Endothelial cell of umbilical vein (primary cell): ENCODE measurements at regions of chr10 and their contacts with region 1.

Region 1: GRCh38 chr10:67849331-67850011 is 11.5 kb upstream of the DNAJC12 start:
- DNase-seq: peak; percentile 92
- H3K4me3 ChIP-seq: peak overlapping the region; percentile 66 to 88 (median 74)
- H3K27ac ChIP-seq: peak overlapping the region; percentile 74
- H3K4me1 ChIP-seq: peaks cover 3% of the 10 kb centered on the region
- H3K27me3 ChIP-seq: no peaks in the 10 kb centered on the region
- CTCF ChIP-seq: no peak
- POLR2A ChIP-seq: peak; percentile 61

Region 2: DNA sequence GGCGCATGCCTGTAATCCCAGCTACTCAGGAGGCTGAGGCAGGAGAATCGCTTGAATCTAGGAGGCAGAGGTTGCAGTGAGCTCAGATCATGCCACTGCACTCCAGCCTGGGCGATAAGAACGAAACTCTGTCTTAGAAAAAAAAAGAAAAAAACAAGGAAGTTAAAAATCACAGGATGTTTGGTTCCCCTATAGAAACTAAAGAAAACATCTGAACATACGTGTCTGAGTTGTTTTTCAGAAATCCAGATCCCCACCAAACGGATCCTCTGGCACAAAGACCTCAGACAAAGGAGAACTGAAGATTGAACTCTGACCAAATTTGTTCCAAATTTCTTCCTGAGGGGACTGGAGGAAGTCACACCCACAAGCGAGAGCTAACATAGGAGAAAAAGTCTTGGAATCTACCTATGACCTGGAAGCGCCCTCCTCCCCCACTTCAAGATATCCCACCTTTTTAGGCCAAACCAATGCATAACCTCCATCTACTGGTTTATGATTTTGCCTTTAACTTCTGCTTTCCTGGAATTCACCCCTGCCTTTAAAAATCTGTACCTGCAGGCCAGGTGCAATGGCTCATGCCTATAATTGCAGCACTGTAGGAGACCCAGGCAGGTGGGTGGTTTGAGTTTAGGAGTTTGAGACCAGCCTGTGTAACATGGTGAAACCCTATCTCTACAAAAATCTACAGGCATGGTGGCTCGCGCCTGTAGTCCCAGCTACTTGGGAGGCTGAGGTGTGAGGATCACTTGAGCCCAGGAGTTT is 15.3 kb after region 1 on chr10:
- CTCF ChIA-PET with region 1: interaction called, 17 read pairs
- POLR2A ChIA-PET with region 1: no interaction called
- dilution Hi-C with region 1: no loop called
- intact Hi-C with region 1: no loop called
- DNase-seq: no peak
- H3K4me3 ChIP-seq: no peak overlapping the region
- H3K27ac ChIP-seq: no peak overlapping the region
- H3K4me1 ChIP-seq: no peaks in the 10 kb centered on the region
- H3K27me3 ChIP-seq: no peaks in the 10 kb centered on the region
- CTCF ChIP-seq: no peak
- POLR2A ChIP-seq: no peak

Region 3: DNA sequence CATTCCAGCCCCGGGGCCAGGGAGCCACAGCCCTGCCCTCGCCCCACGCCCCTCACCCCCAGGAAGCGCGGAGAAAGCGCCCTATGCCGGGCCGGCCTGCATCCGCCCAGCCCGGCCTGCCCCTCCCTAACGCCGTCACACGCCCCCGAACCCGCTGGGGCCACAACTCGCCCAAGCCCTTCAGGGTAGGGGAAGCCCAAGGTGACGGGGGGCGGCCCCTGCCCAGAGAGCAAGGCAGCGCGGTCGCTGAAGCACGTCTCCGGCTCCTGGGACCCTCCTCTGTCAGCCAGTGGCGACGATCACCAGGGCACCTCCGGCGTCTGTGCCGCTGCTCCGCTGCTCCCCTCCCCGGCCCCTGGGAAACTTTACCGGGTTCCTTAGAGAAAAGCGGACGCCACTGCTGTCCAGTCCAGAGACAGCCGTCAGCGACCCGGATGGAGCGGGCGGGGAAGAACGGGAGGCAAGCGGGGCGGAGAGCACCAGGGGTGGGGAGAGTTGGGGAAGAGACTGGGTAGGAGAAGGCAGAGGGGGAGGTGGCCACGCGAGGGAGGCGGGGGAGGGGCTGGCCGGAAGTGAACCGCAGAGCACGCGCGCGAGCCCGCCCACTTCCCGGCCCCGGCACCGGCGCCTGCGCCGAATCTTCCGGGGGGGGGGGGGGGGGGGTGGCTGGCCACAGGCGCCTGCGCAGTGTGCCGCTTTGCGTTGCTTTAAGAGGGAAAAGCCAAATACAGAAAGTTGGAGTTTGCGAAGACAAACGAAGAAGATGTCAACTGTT is 225.5 kb after region 1 on chr10 and contains the start of gene HERC4:
- CTCF ChIA-PET with region 1: no interaction called
- POLR2A ChIA-PET with region 1: no interaction called
- dilution Hi-C with region 1: no loop called
- intact Hi-C with region 1: loop called (anchors 10 kb)
- DNase-seq: peak; percentile 88
- H3K4me3 ChIP-seq: peak within 1 kb of the TSS; percentile 95 to 99 (median 96)
- H3K27ac ChIP-seq: peak within 1 kb of the TSS; percentile 95
- H3K4me1 ChIP-seq: peaks cover 32% of the 10 kb centered on the region
- H3K27me3 ChIP-seq: no peaks in the 10 kb centered on the region
- CTCF ChIP-seq: no peak
- POLR2A ChIP-seq: peak; percentile 54
- total RNA-seq, gene HERC4: 68.7 and 73.7 TPM in 2 replicates

Region 4: DNA sequence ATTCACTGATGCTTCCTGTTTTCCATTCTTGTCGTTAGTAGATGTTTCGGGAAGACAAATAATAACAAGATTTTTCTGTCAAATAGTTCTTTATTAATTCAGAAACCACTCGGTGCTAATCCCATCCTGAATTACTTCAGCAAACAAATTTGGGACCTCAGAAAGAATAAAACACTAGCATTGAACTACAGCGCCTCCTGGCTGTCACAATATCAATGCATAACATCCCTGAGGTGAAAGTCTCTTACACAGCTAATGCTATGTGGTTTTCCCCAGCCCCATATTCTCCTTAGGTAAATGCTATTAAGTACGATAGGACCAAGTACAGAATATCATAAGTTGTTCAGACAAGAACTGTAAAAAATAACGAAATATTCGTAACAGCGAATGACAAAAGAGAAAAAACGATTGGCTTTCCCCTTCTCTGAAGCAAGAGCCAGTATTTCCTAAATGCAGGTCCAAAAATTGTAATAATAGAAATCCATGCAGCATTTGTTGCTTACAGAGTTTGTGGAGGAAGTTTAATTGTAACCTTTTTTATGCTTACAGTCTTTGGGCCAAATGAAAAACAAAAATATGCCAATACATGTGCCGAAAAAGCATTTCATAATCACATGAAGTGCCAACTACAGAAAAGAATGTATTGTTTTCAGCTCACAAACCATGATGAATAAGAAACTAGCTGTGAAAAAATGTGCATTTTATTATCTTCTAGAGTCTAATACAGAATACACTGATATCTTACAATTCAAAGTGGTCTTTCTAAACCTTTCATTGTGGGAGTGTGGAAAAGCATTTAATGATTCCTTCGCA is 307.1 kb after region 1 on chr10:
- CTCF ChIA-PET with region 1: interaction called, 50 read pairs
- POLR2A ChIA-PET with region 1: no interaction called
- dilution Hi-C with region 1: no loop called
- intact Hi-C with region 1: no loop called
- DNase-seq: peak; percentile 74
- H3K4me3 ChIP-seq: no peak overlapping the region
- H3K27ac ChIP-seq: no peak overlapping the region
- H3K4me1 ChIP-seq: peaks cover 14% of the 10 kb centered on the region
- H3K27me3 ChIP-seq: no peaks in the 10 kb centered on the region
- CTCF ChIP-seq: peak; percentile 66 to 71
- POLR2A ChIP-seq: no peak

Region 5: GRCh38 chr10:68526626-68527307 is 677.3 kb after region 1 on chr10:
- CTCF ChIA-PET with region 1: no interaction called
- POLR2A ChIA-PET with region 1: no interaction called
- dilution Hi-C with region 1: no loop called
- intact Hi-C with region 1: loop called (anchors 5 kb)
- DNase-seq: peak; percentile 3
- H3K4me3 ChIP-seq: peak overlapping the region; percentile 63 to 94 (median 77)
- H3K27ac ChIP-seq: peak overlapping the region; percentile 26
- H3K4me1 ChIP-seq: peaks cover 3% of the 10 kb centered on the region
- H3K27me3 ChIP-seq: no peaks in the 10 kb centered on the region
- CTCF ChIP-seq: no peak
- POLR2A ChIP-seq: no peak